Left ventricle myocardium superior (tissue), 1 donor: ENCODE measurements at regions of chr5 and their contacts with region 1.

Region 1: GRCh38 chr5:142888469-142889085 is 118.4 kb downstream of the ARHGAP26 start:
- DNase-seq: no peak
- ATAC-seq: peak; percentile 61

Region 2: GRCh38 chr5:142727735-142728047 is 160.9 kb before region 1 on chr5:
- intact Hi-C with region 1: no loop called
- DNase-seq: no peak
- ATAC-seq: no peak

Region 3: DNA sequence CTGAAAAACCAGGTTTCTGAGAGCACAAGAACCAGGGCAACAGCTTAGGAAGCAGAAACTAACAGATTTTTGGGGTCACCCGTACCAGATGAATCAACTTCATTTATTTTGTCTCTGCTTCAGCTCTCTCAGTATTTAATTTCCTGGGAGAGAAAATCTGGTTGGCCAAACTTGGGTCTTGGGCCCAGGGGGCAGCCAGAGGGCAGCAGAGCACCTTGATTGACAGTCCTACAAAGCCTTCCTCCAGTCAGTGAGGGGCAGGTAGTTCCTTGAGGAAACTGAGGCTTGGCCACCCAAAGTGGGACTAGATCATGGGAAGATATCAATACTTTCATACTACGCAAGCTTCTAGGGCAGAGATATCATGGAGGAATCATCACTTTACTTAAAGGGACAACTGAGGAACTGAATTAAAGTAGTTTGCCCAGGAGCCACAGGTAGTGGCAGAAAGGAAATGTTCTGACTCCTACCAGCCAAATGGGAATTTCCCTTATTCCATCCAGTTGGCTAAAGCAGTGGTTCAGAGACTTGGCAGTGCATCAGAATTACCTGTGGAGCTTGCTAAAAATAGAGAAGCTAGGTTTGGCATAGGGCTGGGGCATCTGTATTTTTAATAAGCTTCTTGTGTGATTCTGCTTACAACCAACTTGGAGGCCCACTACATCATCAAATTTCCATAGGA is 139.9 kb before region 1 on chr5:
- intact Hi-C with region 1: loop called (anchors 10 kb)
- DNase-seq: peak; percentile 46
- ATAC-seq: no peak

Region 4: DNA sequence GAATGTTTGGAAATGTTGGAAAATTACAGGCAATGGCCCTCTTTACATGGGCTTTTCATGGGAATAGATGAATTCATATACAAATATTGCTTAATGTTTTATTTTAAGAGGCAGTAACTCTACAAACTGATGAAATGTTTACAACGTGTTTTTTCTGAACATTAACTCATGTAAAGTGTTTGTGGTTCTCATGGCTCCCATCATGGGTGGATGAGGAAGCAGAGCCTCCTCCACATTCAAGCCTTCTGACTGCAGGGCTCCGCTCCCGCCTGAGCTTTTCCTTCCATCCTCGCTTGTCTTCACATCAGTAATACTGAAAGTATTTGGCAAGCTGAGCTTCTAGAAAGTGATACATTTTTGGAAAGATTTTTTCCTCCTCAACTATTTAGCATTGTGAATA is 85.8 kb after region 1 on chr5:
- intact Hi-C with region 1: no loop called
- DNase-seq: no peak
- ATAC-seq: no peak